Natural killer cell (primary cell): ENCODE measurements at regions of chr7 and their contacts with region 1.

Region 1: GRCh38 chr7:90346336-90347125 is at the start of gene GTPBP10:
- DNase-seq: peak; percentile 93 to 99
- ATAC-seq: peak; percentile 96 to 99 (median 98)
- H3K4me3 ChIP-seq: peak within 1 kb of the TSS; percentile 93
- H3K4me3 Mint-ChIP-seq: peak within 1 kb of the TSS; percentile 94
- H3K27ac ChIP-seq: peak within 1 kb of the TSS; percentile 95
- H3K27ac Mint-ChIP-seq: peak within 1 kb of the TSS; percentile 93 to 96
- H3K4me1 ChIP-seq: peaks cover 11% of the 10 kb centered on the region
- H3K4me1 Mint-ChIP-seq: peaks cover 34 to 53% of the 10 kb centered on the region in 2 donors
- H3K27me3 ChIP-seq: no peaks in the 10 kb centered on the region
- H3K27me3 Mint-ChIP-seq: no peaks in the 10 kb centered on the region
- CTCF ChIP-seq: peak; percentile 73
- total RNA-seq, gene GTPBP10: 15.2 to 19.6 (median 19.2) TPM

Region 2: GRCh38 chr7:90244909-90245851 is 101.4 kb before region 1 on chr7 and contains the start of gene CFAP69:
- intact Hi-C with region 1: loop called (anchors 2 kb)
- DNase-seq: peak; percentile 79 to 87
- ATAC-seq: peak; percentile 85 to 94 (median 92)
- H3K4me3 ChIP-seq: peak within 1 kb of the TSS; percentile 68
- H3K4me3 Mint-ChIP-seq: peak within 1 kb of the TSS; percentile 89
- H3K27ac ChIP-seq: no peak within 1 kb of the TSS
- H3K27ac Mint-ChIP-seq: peak within 1 kb of the TSS; percentile 63 to 83
- H3K4me1 ChIP-seq: peaks cover 8% of the 10 kb centered on the region
- H3K4me1 Mint-ChIP-seq: peaks cover 15 to 23% of the 10 kb centered on the region in 2 donors
- H3K27me3 ChIP-seq: peaks cover 2% of the 10 kb centered on the region
- H3K27me3 Mint-ChIP-seq: peaks cover 41 to 55% of the 10 kb centered on the region in 2 donors
- CTCF ChIP-seq: no peak
- total RNA-seq, gene CFAP69: 0.13 TPM in 1 of 3 donors, not detected in the others

Region 3: GRCh38 chr7:90403174-90404113 is 56.9 kb after region 1 on chr7 and contains the start of gene CLDN12:
- intact Hi-C with region 1: loop called (anchors 1 kb)
- DNase-seq: peak; percentile 72 to 91
- ATAC-seq: peak; percentile 95 to 96 (median 96)
- H3K4me3 ChIP-seq: peak within 1 kb of the TSS; percentile 63
- H3K4me3 Mint-ChIP-seq: peak within 1 kb of the TSS; percentile 93
- H3K27ac ChIP-seq: peak within 1 kb of the TSS; percentile 53
- H3K27ac Mint-ChIP-seq: peak within 1 kb of the TSS; percentile 92 to 96
- H3K4me1 ChIP-seq: peaks cover 10% of the 10 kb centered on the region
- H3K4me1 Mint-ChIP-seq: peaks cover 16 to 19% of the 10 kb centered on the region in 2 donors
- H3K27me3 ChIP-seq: no peaks in the 10 kb centered on the region
- H3K27me3 Mint-ChIP-seq: no peaks in the 10 kb centered on the region
- CTCF ChIP-seq: no peak
- total RNA-seq, gene CLDN12: 0.68 to 0.86 (median 0.71) TPM